GM12878 (cell line): ENCODE measurements at regions of chr11 and their contacts with region 1.

Region 1: DNA sequence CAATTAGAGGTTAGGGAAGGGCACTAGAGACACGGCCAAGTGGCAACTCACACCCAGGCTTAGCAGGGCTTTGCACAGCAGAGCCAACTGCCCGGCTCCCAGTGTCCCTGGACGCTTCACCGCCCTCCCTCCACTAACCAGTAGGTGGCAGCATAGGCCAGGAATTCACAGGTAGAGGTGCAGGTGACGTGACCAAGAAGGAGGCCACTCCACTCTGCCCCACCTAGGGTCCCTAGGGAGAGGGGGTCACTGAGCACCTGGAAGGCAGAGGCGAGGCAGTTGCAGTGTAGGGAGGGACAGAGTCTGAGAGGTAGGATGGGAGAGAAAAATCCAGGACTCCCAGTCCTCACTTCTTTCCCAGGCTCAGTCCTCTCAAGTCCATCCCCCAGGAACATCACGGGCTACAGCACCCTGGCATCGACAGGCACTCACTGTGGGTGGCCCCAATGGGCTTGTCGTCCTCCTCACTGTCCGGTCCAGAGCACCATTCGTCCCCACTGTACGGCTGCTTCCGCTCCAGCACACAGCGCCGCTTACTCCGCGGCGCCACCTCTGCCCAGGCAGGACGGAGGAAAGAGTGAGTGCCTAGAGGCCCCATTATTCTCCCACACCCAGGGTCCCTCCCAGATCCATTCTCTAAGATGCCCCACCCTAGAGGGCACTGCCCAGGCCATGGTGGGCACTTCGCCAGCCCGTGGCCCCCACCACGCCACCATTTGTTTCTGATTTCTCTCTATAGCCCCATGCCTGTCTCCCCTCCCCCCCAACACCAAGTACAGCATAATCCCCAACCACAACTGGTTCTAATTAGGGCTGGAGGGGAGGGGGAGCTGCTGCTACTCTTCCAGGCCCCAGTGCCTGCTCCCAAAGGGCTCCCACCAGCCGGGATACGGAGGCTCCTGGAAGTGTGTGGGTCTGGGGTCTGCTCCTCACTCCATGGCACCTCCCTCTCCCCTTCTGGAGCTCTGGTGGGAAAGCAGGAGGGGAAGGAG is 18.4 kb downstream of the BCL9L start:
- DNase-seq: peak; percentile 61
- ATAC-seq: peak; percentile 98
- H3K4me3 ChIP-seq: no peak overlapping the region
- H3K27ac ChIP-seq: no peak overlapping the region
- H3K4me1 ChIP-seq: peaks cover 10% of the 10 kb centered on the region
- H3K27me3 ChIP-seq: no peaks in the 10 kb centered on the region
- CTCF ChIP-seq: peak; percentile 89 to 99 (median 93); a peak in 5 of 6 replicates
- EP300 ChIP-seq: no peak
- POLR2A ChIP-seq: 0 out of 2 replicates have a peak, but pooled peaks have one; percentile 13
- RAD21 ChIP-seq: peak; percentile 98

Region 2: DNA sequence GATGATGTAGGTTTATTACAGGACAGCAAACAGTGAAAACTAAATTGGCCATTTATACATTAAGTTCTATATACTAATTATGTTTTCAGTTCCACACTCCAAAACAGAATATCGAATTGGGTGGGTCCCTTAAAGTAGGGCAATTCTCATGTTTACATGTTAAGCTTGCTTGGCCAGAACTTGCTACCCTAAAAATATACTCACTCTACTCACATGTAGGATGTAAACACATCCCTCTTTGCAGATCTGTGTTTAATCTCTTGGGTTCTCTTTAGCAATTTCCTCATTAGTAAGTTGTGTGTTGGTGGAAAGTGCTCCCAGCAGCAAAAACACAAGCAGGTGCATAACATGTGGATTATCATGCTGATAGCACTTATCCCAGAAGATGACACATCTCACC is 93.8 kb before region 1 on chr11:
- CTCF ChIA-PET with region 1: no interaction called
- POLR2A ChIA-PET with region 1: no interaction called
- RAD21 ChIA-PET with region 1: no interaction called
- SMC1A ChIA-PET with region 1: no interaction called
- in situ Hi-C with region 1: no loop called
- intact Hi-C with region 1: no loop called
- DNase-seq: no peak
- ATAC-seq: no peak
- H3K4me3 ChIP-seq: no peak overlapping the region
- H3K27ac ChIP-seq: no peak overlapping the region
- H3K4me1 ChIP-seq: no peaks in the 10 kb centered on the region
- H3K27me3 ChIP-seq: no peaks in the 10 kb centered on the region
- CTCF ChIP-seq: no peak
- EP300 ChIP-seq: no peak
- POLR2A ChIP-seq: no peak
- RAD21 ChIP-seq: no peak

Region 3: DNA sequence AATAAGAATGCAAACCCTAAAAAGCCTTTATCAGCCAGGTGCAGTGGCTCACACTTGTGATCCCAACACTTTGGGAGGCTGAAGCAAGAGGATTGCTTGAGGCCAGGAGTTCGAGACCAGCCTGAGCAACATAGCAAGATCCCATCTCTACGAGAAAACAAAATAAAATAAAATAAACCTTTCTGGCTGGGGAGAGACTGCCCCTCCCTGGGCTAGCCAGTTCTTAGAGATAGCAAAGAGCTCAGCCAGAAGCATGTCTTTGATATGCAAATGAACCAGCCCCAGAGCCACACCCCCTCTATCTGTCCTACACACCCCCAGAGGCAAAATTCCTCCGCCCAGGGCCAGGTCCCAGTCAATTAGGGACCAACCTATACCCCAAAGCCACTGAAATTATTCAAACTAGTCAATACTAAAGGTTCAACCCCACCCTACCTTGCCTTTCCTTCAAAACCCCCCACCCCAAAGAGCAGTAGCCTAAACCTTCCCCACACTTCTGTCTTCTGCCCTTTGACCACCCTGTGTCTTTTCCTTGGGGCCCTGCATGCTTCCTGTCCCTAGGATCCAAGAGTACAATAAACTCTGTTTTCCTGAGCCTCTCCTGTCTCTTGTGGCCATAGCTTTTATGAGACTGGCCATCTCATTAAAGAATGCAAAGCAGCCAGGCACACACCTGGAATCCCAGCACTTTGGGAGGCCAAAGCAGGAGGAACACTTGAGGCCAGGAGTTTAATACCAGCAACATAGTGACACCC is 61.0 kb before region 1 on chr11:
- CTCF ChIA-PET with region 1: no interaction called
- POLR2A ChIA-PET with region 1: no interaction called
- RAD21 ChIA-PET with region 1: no interaction called
- SMC1A ChIA-PET with region 1: no interaction called
- in situ Hi-C with region 1: no loop called
- intact Hi-C with region 1: no loop called
- DNase-seq: no peak
- ATAC-seq: 0 out of 3 replicates have a peak, but pooled peaks have one; percentile 13
- H3K4me3 ChIP-seq: no peak overlapping the region
- H3K27ac ChIP-seq: no peak overlapping the region
- H3K4me1 ChIP-seq: peaks cover 12% of the 10 kb centered on the region
- H3K27me3 ChIP-seq: peaks cover 0 to 1% of the 10 kb centered on the region in 2 experiments; a peak in 2 of 4 replicates
- CTCF ChIP-seq: no peak
- EP300 ChIP-seq: no peak
- POLR2A ChIP-seq: no peak
- RAD21 ChIP-seq: no peak

Region 4: DNA sequence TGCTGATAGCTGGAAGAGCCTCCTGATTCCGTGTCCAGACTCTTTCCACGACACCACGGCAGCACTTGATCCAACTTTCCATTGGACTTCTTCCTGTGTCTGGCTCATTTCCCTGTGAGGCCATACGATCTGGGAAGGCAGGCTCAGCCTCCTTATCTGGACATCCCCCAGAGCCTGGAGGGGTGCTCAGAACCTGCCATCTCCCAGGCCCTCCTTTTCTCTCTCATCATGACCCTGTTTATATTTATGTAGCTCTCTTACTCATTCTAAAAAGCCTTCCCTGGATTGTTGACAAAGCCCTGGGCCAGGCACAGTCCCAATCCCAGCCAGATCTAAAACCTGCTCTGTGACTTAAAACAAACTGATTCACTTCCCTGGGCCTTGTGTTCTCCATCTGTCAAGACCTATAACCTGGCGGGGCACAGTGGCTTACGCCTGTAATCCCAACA is 26.2 kb after region 1 on chr11:
- CTCF ChIA-PET with region 1: interaction called, 330 read pairs
- POLR2A ChIA-PET with region 1: interaction called, 35 read pairs
- RAD21 ChIA-PET with region 1: interaction called, 169 read pairs
- SMC1A ChIA-PET with region 1: interaction called, 185 read pairs
- in situ Hi-C with region 1: no loop called
- intact Hi-C with region 1: loop called (anchors 1 kb)
- DNase-seq: no peak
- ATAC-seq: no peak
- H3K4me3 ChIP-seq: no peak overlapping the region
- H3K27ac ChIP-seq: no peak overlapping the region
- H3K4me1 ChIP-seq: peaks cover 10% of the 10 kb centered on the region; the same call in 1 of the 2 replicates
- H3K27me3 ChIP-seq: no peaks in the 10 kb centered on the region
- CTCF ChIP-seq: no peak
- EP300 ChIP-seq: no peak
- POLR2A ChIP-seq: no peak
- RAD21 ChIP-seq: no peak

Region 5: GRCh38 chr11:118956094-118956846 is 48.9 kb after region 1 on chr11 and contains the start of gene UPK2:
- CTCF ChIA-PET with region 1: interaction called, 13 read pairs
- POLR2A ChIA-PET with region 1: no interaction called
- RAD21 ChIA-PET with region 1: interaction called, 3 read pairs
- SMC1A ChIA-PET with region 1: interaction called, 3 read pairs
- in situ Hi-C with region 1: loop called (anchors 5 kb)
- intact Hi-C with region 1: loop called (anchors 1 kb)
- DNase-seq: peak; percentile 19
- ATAC-seq: peak; percentile 100
- H3K4me3 ChIP-seq: no peak within 1 kb of the TSS
- H3K27ac ChIP-seq: no peak within 1 kb of the TSS
- H3K4me1 ChIP-seq: no peaks in the 10 kb centered on the region
- H3K27me3 ChIP-seq: peaks cover 0 to 9% of the 10 kb centered on the region in 2 experiments; a peak in 2 of 4 replicates
- CTCF ChIP-seq: peak; percentile 91 to 98 (median 97)
- EP300 ChIP-seq: no peak
- POLR2A ChIP-seq: no peak
- RAD21 ChIP-seq: peak; percentile 94
- polyA plus RNA-seq, gene UPK2: not detected